ENCODE measurements at regions of chr6 and their contacts with region 1.

Region 1: GRCh38 chr6:139161817-139162284 is 27.0 kb downstream of the HECA start:
- DNase-seq: peak; percentile 62 to 87 (median 69)
- H3K4me3 ChIP-seq: peak overlapping the region in 1 of 2 donors; percentile 12
- H3K4me3 Mint-ChIP-seq: peak overlapping the region; percentile 76 to 91 (median 83)
- H3K27ac ChIP-seq: peak overlapping the region; percentile 56
- H3K27ac Mint-ChIP-seq: peak overlapping the region; percentile 86 to 98 (median 95)
- H3K4me1 ChIP-seq: peaks cover 100% of the 10 kb centered on the region
- H3K4me1 Mint-ChIP-seq: peaks cover 73 to 97% (median 85%) of the 10 kb centered on the region in 4 donors
- H3K27me3 ChIP-seq: no peaks in the 10 kb centered on the region
- H3K27me3 Mint-ChIP-seq: no peaks in the 10 kb centered on the region

Region 2: DNA sequence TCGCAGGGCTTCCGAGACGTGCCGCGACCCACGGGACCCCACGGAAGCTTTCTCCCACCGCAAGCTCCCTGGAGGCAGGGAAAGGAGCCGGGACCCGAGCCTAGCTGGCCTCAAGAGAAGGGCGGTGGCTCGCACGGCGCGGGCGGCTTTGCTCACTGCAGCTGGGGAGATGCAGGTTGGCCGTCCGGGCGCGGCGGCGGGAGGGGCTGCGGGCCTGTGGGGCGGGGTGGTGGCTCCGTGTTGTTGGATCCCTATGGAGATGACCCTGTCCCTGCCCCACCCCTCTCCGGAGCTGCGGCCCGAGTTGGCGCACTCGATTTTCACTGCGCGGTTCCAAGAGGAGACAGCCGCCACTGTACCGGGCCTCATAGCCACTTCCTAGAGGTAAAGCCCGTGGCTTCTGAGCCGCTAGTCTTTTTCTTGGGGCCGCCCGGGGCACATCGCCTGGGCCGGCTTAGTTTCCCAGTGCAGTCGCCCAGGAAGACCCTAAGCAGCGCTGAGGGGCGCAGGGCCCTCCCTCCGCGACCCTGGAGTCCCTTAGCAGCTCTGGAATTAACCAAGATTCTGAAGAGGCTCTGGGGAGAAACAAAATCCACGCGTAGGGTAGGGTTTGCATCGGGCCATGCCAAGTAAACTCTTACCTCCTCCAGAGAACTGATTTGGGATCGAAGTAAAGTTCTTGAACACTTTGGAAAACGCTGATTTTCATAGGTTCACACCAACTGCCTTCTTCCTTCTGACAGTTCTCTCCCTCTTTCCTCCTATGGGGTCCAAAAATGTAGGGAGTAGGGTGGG is 365.8 kb before region 1 on chr6 and contains the start of gene ECT2L:
- CTCF ChIA-PET with region 1: no interaction called
- POLR2A ChIA-PET with region 1: no interaction called
- intact Hi-C with region 1: no loop called
- DNase-seq: no peak
- H3K4me3 ChIP-seq: no peak within 1 kb of the TSS
- H3K4me3 Mint-ChIP-seq: no peak within 1 kb of the TSS
- H3K27ac ChIP-seq: no peak within 1 kb of the TSS
- H3K27ac Mint-ChIP-seq: no peak within 1 kb of the TSS
- H3K4me1 ChIP-seq: no peaks in the 10 kb centered on the region
- H3K4me1 Mint-ChIP-seq: no peaks in the 10 kb centered on the region
- H3K27me3 ChIP-seq: no peaks in the 10 kb centered on the region
- H3K27me3 Mint-ChIP-seq: peaks cover 7% of the 10 kb centered on the region in 2 donors
- total RNA-seq, gene ECT2L: not detected

Region 3: DNA sequence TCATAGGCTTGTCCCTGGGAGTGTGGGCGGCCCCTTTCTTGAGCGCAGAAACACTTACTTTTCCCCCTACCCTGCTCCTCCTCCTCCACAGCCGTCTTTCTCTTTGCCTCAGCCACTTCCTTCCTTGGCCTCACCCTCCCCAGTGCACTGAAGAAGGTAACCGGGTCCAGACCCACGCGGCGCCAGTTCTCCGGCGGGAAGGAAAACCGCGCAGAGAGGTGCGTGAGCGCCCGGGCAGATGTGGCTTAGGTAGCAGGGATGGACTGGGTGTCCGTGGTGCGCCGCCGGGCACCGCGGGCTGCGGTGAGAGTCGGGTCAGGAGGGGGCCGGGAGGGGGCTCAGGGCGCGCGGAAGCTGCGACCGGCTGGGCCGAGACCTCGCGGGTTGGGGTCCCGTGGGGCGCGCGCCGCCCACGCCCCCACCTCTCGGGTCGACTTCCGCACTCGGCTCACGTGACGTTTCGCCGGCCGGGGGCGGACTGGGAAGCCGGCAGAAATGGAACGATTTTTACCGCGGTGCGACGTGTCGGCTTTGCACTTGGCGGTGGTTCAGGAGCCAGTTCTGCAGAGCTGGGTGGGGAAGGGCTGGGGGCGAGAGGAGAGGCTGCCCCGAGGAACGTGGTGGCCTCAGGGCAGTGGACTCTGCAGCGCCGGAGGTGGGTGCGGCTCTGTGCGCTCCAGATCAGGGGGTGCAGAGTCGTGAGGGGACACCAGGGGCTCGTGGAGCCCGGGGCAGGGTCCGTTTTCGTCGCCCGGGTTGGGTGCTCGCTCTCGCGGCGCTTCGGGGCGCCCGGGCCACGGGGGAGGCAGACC is 133.0 kb before region 1 on chr6 and contains the start of gene ABRACL:
- CTCF ChIA-PET with region 1: no interaction called
- POLR2A ChIA-PET with region 1: interaction called, 9 read pairs
- intact Hi-C with region 1: loop called (anchors 1 kb)
- DNase-seq: peak; percentile 74 to 88 (median 75)
- H3K4me3 ChIP-seq: peak within 1 kb of the TSS; percentile 59 to 97
- H3K4me3 Mint-ChIP-seq: peak within 1 kb of the TSS in 5 of 8 donors; percentile 93 to 98 (median 95)
- H3K27ac ChIP-seq: peak within 1 kb of the TSS; percentile 88
- H3K27ac Mint-ChIP-seq: peak within 1 kb of the TSS; percentile 88 to 98 (median 92)
- H3K4me1 ChIP-seq: peaks cover 46% of the 10 kb centered on the region
- H3K4me1 Mint-ChIP-seq: peaks cover 22 to 34% (median 28%) of the 10 kb centered on the region in 4 donors
- H3K27me3 ChIP-seq: no peaks in the 10 kb centered on the region
- H3K27me3 Mint-ChIP-seq: no peaks in the 10 kb centered on the region
- total RNA-seq, gene ABRACL: 103 to 112 TPM

Region 4: DNA sequence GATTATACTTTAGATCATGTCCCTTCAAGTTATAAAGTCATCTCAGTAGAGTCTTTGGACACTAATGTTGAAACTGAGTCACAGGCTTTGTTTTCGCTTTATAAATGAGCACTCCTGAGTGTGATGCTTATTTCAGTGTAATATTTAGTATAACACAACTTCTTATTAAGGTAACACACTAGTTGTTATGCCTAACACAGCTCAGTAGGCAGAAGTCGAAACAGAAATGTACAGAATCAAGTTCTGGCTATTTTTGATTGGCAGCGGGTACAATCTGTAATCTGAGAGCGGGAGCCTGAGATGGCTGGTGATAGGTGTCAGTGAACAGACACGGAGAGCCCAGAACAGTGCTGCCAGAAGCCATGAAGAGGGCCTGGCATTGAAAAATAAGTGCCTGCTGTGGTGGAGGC is 15.5 kb before region 1 on chr6:
- CTCF ChIA-PET with region 1: interaction called, 54 read pairs
- POLR2A ChIA-PET with region 1: interaction called, 169 read pairs
- intact Hi-C with region 1: loop called (anchors 1 kb)
- DNase-seq: no peak
- H3K4me3 ChIP-seq: peak overlapping the region; percentile 39 to 40
- H3K4me3 Mint-ChIP-seq: peak overlapping the region; percentile 66 to 90 (median 82)
- H3K27ac ChIP-seq: peak overlapping the region; percentile 50
- H3K27ac Mint-ChIP-seq: peak overlapping the region; percentile 69 to 92 (median 86)
- H3K4me1 ChIP-seq: peaks cover 97% of the 10 kb centered on the region
- H3K4me1 Mint-ChIP-seq: peaks cover 80 to 94% (median 87%) of the 10 kb centered on the region in 4 donors
- H3K27me3 ChIP-seq: no peaks in the 10 kb centered on the region
- H3K27me3 Mint-ChIP-seq: no peaks in the 10 kb centered on the region

Region 5: GRCh38 chr6:139173172-139173571 is 11.3 kb after region 1 on chr6:
- CTCF ChIA-PET with region 1: interaction called, 6 read pairs
- POLR2A ChIA-PET with region 1: interaction called, 21 read pairs
- intact Hi-C with region 1: loop called (anchors 1 kb)
- DNase-seq: peak in 3 of 5 donors; percentile 24 to 61 (median 25)
- H3K4me3 ChIP-seq: no peak overlapping the region
- H3K4me3 Mint-ChIP-seq: peak overlapping the region in 7 of 8 donors; percentile 20 to 69 (median 53)
- H3K27ac ChIP-seq: no peak overlapping the region
- H3K27ac Mint-ChIP-seq: peak overlapping the region; percentile 29 to 88 (median 77)
- H3K4me1 ChIP-seq: peaks cover 97% of the 10 kb centered on the region
- H3K4me1 Mint-ChIP-seq: peaks cover 81 to 93% (median 89%) of the 10 kb centered on the region in 4 donors
- H3K27me3 ChIP-seq: no peaks in the 10 kb centered on the region
- H3K27me3 Mint-ChIP-seq: no peaks in the 10 kb centered on the region

Region 6: DNA sequence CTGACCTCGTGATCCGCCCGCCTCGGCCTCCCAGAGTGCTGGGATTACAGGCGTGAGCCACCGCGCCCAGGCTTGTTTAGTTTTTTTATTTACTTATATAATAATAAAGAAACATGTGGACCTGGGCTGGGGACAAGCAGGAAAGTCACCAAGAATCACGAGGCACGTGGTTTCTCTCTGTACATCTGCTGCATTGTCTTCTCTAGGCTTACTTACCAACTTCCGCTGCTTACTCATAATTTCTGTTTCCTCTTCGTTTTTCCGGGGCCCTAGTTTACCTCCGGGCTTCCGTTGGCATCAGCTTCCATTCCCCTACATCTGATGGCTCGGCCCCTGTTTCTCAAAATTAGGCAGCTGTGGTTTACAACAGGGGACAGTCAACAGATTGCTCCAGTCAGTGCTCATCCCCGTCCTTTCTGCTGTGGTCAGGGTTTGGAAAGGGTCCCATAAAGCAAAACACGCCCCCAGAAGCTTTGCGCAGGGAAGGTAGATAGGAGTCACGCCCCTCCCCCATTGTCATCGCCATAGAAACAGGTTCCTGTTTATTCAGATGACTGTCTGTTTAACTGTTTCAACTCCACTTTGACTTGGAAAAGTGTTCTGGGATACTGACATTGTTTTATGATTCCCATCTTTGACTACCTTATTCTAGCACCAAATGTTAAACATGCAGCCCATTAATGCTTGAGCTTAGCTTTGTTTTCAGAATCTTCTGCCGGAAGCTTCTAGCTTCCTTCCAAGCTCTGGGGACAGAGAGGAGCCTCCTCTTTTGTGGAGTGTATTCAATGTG is 161.9 kb after region 1 on chr6:
- CTCF ChIA-PET with region 1: no interaction called
- POLR2A ChIA-PET with region 1: interaction called, 10 read pairs
- intact Hi-C with region 1: loop called (anchors 1 kb)
- DNase-seq: peak; percentile 86 to 91 (median 89)
- H3K4me3 ChIP-seq: peak overlapping the region; percentile 33 to 61
- H3K4me3 Mint-ChIP-seq: peak overlapping the region; percentile 78 to 92 (median 88)
- H3K27ac ChIP-seq: peak overlapping the region; percentile 87
- H3K27ac Mint-ChIP-seq: peak overlapping the region; percentile 98 to 100 (median 98)
- H3K4me1 ChIP-seq: peaks cover 35% of the 10 kb centered on the region
- H3K4me1 Mint-ChIP-seq: peaks cover 21 to 43% (median 34%) of the 10 kb centered on the region in 4 donors
- H3K27me3 ChIP-seq: no peaks in the 10 kb centered on the region
- H3K27me3 Mint-ChIP-seq: no peaks in the 10 kb centered on the region